HEK293T (cell line): ENCODE measurements at regions of chr22 and their contacts with region 1.

Region 1: GRCh38 chr22:41697126-41697775 is 2.1 kb upstream of the MEI1 start:
- DNase-seq: peak; percentile 90

Region 2: GRCh38 chr22:41526837-41527799 is 170.1 kb before region 1 on chr22:
- CTCF ChIA-PET with region 1: no interaction called
- POLR2A ChIA-PET with region 1: no interaction called
- DNase-seq: peak; percentile 67

Region 3: DNA sequence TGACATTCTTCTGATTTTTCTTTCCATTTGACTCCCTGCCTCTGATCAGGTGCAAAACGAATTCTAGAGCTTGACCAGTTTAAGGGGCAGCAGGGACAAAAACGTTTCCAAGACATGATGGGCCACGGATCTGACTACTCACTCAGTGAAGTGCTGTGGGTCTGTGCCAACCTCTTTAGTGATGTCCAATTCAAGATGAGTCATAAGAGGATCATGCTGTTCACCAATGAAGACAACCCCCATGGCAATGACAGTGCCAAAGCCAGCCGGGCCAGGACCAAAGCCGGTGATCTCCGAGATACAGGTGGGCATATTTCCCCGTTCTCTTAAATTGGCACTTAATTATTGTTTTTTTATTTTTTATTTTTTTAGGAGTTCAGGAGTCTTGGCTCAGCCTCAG is 60.8 kb before region 1 on chr22:
- CTCF ChIA-PET with region 1: no interaction called
- POLR2A ChIA-PET with region 1: no interaction called
- DNase-seq: no peak

Region 4: GRCh38 chr22:41656556-41656955 is 40.7 kb before region 1 on chr22:
- CTCF ChIA-PET with region 1: no interaction called
- POLR2A ChIA-PET with region 1: no interaction called
- DNase-seq: no peak

Region 5: DNA sequence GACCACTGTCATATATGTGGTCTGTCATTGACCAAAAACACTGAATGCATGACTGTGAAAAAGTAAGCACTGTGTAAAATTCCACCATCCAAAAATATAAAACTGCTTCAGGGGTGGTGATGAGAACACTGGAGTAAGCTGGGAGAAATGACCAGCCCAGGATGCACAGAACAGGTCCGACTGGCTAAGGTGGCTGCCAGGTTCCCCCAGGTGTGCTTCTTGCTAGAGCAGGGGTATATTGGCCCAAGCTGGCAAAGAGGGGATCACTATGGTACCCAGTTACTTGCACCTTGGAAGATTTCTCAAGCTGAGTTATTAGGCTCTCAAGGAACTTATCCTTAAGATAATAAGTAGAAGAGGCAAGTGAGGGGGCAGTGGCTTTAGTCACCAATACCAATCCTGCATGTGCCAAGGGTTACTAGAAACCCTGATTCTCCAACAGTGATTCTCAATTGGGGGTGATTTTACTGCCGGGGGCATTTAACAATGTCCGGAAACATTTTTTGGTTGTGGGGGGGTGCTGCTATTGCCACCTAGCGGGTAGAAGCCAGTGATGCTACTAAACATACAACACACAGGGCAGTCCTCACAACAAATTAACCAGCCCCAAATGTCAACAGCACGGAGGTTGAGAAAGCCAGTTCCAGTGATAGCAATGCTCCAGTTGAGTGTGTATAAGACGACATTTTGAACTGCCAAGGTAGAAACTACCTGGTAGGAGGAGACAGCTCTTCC is 24.3 kb before region 1 on chr22:
- CTCF ChIA-PET with region 1: no interaction called
- POLR2A ChIA-PET with region 1: no interaction called
- DNase-seq: peak; percentile 39

Region 6: DNA sequence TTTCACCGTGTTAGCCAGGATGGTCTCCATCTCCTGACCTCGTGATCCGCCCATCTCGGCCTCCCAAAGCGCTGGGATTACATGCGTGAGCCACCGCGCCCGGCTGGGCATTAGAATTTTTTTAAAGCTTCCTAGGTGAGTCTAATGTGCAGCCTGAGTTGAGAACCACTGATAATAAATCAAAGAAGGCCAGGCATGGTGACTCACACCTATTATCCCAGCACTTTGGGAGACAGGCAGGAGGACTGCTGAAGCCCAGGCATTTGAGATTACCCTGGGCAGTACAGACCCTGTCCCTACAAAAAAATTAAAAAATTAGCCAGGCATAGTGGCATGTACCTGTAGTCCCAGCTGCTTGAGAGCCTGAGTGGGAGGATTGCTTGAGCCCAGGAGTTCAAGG is 15.8 kb after region 1 on chr22:
- CTCF ChIA-PET with region 1: interaction called, 20 read pairs
- POLR2A ChIA-PET with region 1: interaction called, 7 read pairs
- DNase-seq: no peak

Region 7: DNA sequence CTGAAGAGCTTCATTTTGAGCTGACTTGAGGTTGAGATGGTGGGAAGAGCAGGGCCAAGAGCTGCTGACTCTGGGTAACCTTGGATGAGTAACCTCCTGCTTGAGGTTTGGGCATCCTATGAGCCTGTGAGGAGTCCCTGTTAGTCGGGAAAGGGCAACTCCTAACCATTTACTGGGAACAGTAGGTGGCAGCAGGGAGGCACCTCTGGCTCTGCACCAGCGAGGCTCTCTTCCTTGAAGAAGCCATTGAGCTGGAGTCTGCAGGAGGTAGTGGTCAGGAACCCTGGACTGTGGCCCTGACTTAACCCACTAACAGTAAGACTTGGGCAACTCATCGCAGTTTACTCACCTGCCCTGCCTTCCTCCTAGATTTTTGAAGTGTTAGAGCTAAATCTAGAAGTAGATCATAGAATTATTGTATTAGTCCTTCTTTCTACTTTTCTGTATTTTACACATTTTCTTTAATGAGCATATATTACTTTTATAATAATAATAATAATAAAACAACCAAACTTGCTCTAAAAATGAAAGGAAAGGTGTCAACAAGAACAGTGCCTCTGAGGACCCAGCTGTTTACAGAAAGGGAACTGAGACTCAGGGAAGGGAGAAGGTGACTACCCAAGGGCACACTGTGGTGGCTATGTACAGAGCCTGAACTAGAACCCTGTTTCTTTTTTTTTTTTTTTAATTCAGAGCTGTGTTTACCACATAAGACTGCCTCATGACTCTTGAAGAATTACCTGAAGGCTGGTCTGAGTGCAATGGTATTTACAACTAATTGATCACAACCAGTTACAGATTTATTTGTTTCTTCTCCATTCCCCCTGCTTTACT is 49.5 kb after region 1 on chr22:
- CTCF ChIA-PET with region 1: interaction called, 37 read pairs
- POLR2A ChIA-PET with region 1: interaction called, 3 read pairs
- DNase-seq: peak; percentile 81

Region 8: DNA sequence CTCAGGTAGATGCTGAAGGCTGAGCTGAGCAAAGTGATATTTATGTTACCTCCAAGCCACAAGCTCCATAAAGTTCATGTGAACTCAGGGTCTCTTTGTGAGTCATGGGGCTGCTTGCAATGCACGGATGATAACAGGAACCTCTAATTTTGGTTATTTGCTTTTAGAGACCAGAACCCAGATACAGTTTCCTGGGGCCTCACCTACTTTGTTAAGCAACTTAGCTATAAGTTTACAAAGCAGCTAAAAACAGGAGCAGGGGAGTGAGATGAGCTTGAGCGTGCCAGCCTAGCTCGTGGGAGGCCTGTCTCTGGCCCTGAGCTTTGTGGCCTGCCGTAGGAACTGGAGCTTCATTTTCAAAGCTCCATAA is 164.9 kb after region 1 on chr22:
- CTCF ChIA-PET with region 1: interaction called, 12 read pairs
- POLR2A ChIA-PET with region 1: no interaction called
- DNase-seq: no peak

Region 9: GRCh38 chr22:41940832-41941765 is 243.8 kb after region 1 on chr22:
- CTCF ChIA-PET with region 1: interaction called, 15 read pairs
- POLR2A ChIA-PET with region 1: interaction called, 10 read pairs
- DNase-seq: peak; percentile 76